ENCODE measurements at regions of chr1 and their contacts with region 1.

Region 1: GRCh38 chr1:206563367-206564207 is 48.7 kb downstream of the EIF2D start:
- DNase-seq: no peak
- H3K4me3 Mint-ChIP-seq: peak overlapping the region; percentile 78
- H3K27ac Mint-ChIP-seq: peak overlapping the region; percentile 91
- H3K4me1 Mint-ChIP-seq: peaks cover 93% of the 10 kb centered on the region
- H3K27me3 Mint-ChIP-seq: peaks cover 2% of the 10 kb centered on the region

Region 2: DNA sequence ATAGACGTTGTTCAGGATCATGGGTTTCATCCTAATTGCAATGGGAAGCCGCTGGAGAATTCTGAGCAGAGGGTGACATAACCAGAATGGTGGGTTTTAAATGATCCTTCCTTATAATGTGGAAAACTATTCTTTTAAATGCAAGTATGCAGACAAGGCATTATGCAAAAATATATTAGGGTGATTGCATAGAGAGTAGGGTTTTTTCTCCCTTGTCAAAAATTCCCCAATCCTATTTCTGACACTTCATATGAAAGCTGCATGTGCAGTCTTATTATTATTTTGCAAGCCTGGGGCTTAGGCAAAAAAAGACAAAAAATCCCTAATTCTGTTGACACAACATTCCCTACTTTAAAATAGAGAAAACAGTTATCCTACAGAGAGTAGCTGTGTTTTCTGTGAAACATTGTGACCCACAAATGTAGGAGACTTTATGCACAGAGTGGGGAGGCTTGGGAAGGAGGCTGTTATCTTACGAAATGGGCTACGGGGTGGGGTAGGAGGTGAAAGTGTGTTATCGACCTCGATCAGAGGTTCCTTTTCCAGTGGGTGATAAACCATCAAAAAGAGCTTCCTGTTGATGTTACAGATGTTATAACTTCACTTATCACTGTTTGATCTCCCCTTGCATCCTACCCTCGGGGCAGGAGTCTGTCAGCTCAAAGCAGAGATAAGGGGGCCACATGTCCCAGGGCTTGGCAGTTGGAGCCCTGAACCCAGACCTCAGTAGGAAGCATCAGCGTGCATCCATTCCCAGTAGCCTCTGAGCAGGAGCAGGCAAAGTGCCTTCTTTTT is 483.4 kb before region 1 on chr1:
- intact Hi-C with region 1: no loop called
- DNase-seq: no peak
- H3K4me3 Mint-ChIP-seq: no peak overlapping the region
- H3K27ac Mint-ChIP-seq: no peak overlapping the region
- H3K4me1 Mint-ChIP-seq: peaks cover 18% of the 10 kb centered on the region
- H3K27me3 Mint-ChIP-seq: peaks cover 40% of the 10 kb centered on the region

Region 3: DNA sequence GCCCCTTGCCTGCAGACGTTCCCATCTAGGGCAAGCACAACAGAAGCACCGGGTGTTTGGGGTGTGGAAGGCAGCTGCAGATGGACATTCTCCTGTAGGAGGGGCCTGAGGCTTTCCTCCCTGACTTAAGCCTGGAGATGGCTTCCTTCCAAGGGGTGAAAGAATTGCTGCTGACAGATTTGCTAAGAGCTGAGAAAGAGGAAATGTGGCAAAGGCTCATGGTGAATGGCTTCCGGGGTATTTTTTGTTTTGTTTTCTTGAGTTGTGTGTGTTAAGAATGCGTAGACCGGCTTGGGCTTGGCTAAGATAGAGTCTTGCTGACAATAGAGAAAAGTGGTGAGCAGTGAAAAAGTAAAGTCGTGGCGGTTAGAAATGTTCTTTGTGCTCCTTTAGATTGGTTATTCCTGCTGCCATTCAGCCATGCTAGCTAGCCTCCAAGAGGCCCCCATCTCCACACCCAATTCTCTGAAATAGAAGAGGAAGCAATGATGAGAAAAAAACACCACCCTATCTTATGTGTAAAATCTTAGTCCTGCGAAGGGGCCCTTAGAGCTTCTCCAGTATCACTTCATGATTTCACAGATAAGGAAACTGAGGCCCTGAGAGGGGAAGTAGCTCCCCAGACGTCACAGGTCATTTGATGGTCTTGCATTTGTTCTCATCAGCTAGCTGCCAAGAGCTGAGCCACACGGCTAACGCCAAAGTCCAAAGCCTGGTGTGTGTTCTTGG is 11.7 kb after region 1 on chr1:
- intact Hi-C with region 1: loop called (anchors 1 kb)
- DNase-seq: peak; percentile 64
- H3K4me3 Mint-ChIP-seq: peak overlapping the region; percentile 70
- H3K27ac Mint-ChIP-seq: peak overlapping the region; percentile 100
- H3K4me1 Mint-ChIP-seq: peaks cover 97% of the 10 kb centered on the region
- H3K27me3 Mint-ChIP-seq: no peaks in the 10 kb centered on the region